ENCODE measurements at regions of chr5 and their contacts with region 1.

Region 1: GRCh38 chr5:132556763-132557477 is at the start of gene RAD50:
- DNase-seq: peak; percentile 79 to 96
- H3K4me3 ChIP-seq: peak within 1 kb of the TSS; percentile 73 to 95
- H3K27ac ChIP-seq: peak within 1 kb of the TSS; percentile 72 to 95
- H3K4me1 ChIP-seq: peaks cover 7 to 11% of the 10 kb centered on the region in 2 donors
- H3K27me3 ChIP-seq: no peaks in the 10 kb centered on the region
- CTCF ChIP-seq: no peak
- total RNA-seq, gene RAD50: 29.4 TPM

Region 2: DNA sequence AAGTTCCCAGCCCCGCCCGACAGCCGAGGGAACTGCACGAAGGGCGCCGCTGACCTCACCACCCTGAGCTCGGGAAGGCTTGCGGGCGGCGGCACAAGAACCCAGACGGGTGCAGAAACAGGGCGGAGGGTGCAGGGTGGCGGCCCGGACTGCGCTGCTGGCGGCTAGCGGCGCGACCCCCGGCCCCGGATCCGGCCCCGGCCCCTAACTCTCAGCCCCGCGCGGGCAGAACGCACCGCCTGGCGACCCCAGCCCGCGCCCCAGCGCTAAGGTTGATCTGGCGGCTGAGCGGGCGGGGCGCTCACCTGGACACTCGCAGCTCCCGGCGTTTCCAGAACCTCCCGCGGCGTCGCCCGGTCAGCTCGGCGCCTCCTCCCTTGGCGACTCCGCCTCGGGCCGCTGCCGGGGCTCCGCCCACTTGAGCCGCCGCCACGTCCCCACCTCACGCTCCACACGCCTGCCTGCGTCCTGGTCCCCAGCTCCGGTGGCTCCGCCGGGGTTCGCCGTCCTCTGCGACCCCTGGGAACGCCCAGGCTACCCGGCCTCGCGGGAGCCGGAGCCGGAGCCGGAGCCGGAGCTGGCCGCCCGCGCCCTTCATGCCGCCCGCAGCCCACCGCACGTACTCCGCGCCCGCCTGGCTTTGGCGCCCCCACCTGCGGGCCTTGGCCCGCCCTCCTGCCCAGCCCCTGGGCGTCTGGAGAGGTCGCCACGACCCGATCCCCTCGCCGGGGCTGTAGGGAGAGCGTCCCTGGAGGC is 329.3 kb before region 1 on chr5 and contains the start of gene P4HA2:
- intact Hi-C with region 1: no loop called
- DNase-seq: peak in 1 of 2 donors; percentile 89
- H3K4me3 ChIP-seq: peak within 1 kb of the TSS; percentile 61 to 83
- H3K27ac ChIP-seq: peak within 1 kb of the TSS; percentile 84 to 87
- H3K4me1 ChIP-seq: peaks cover 20 to 42% of the 10 kb centered on the region in 2 donors
- H3K27me3 ChIP-seq: no peaks in the 10 kb centered on the region
- CTCF ChIP-seq: peak in 2 of 3 experiments; percentile 25 to 27
- total RNA-seq, gene P4HA2: 22.6 TPM

Region 3: GRCh38 chr5:132410451-132411381 is 146.2 kb before region 1 on chr5:
- intact Hi-C with region 1: loop called (anchors 5 kb)
- DNase-seq: peak; percentile 63 to 90
- H3K4me3 ChIP-seq: peak overlapping the region; percentile 88 to 96
- H3K27ac ChIP-seq: peak overlapping the region; percentile 97 to 100
- H3K4me1 ChIP-seq: peaks cover 0 to 43% of the 10 kb centered on the region in 2 donors
- H3K27me3 ChIP-seq: no peaks in the 10 kb centered on the region
- CTCF ChIP-seq: peak; percentile 46 to 65 (median 56)

Region 4: DNA sequence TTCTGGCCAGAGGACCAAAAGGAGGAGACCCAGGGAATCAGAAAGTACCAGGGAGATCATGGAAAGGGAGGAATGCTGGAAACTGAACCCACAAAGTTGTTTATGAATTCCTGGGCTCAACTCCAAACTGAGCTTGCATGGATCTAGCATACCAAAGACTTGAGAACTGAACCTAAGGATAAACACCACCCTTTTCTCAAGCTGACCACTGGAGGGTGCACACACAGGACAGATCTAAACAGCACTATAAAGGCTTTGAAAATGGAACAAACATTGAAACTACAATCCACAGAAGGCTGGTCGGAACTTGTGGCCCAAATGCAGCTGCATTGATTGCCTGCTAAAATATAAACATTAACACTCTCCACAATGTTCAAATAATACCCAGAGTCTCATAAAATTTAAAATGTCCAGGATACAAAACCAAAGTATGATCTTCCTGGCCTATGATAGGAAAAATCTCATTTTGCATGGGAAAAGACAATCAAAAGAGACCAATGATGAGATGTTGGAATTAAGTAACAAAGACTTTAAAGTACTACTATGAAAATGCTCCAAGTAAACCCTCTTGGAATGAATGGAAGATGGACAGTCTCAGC is 50.7 kb before region 1 on chr5:
- intact Hi-C with region 1: no loop called
- DNase-seq: peak in 1 of 2 donors; percentile 62
- H3K4me3 ChIP-seq: no peak overlapping the region
- H3K27ac ChIP-seq: peak overlapping the region; percentile 14 to 19
- H3K4me1 ChIP-seq: peaks cover 0 to 4% of the 10 kb centered on the region in 2 donors
- H3K27me3 ChIP-seq: no peaks in the 10 kb centered on the region
- CTCF ChIP-seq: peak in 2 of 3 experiments; percentile 50 to 52

Region 5: DNA sequence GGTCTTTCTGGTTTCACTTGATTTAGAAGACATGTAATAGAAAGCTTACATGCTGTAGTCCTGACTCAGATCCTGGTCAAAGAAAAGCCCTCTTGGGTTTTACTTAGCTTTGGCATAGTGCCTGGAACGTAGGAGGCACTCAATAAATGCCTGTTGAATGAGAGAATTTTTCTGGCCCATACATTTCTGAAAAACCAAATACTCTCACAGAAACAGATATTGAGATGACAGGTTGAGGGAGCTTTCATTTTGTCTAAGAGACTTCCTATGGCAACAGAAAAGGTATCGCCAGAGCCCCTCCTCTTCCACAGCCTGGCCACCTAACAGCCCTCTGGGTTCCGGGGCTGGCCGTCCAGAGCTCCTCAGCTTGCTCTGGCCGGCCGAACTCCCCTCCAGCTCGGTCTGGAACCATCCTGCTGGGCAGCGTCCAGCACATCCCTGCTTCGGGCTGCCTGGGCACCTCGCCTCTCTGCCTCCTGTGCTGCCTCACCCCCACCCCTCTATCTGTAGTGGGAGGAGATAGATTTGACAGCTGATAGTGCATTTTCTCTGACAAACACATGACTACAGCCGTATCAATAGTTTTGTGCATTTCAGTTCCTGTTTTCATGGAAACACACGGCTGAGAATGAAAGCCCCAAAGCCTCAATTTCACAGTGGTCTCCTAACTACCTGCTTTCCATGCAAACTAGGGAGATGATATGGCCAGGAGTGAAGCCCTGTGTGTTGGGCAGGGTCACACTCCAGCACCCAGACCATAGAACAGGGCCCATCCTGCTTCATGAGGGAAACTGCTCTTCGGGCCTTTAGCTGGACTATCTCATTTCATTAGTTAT is 118.0 kb after region 1 on chr5:
- intact Hi-C with region 1: loop called (anchors 5 kb)
- DNase-seq: peak in 1 of 2 donors; percentile 73
- H3K4me3 ChIP-seq: peak overlapping the region; percentile 29 to 54
- H3K27ac ChIP-seq: peak overlapping the region; percentile 95 to 96
- H3K4me1 ChIP-seq: peaks cover 9 to 23% of the 10 kb centered on the region in 2 donors
- H3K27me3 ChIP-seq: no peaks in the 10 kb centered on the region
- CTCF ChIP-seq: no peak

Region 6: DNA sequence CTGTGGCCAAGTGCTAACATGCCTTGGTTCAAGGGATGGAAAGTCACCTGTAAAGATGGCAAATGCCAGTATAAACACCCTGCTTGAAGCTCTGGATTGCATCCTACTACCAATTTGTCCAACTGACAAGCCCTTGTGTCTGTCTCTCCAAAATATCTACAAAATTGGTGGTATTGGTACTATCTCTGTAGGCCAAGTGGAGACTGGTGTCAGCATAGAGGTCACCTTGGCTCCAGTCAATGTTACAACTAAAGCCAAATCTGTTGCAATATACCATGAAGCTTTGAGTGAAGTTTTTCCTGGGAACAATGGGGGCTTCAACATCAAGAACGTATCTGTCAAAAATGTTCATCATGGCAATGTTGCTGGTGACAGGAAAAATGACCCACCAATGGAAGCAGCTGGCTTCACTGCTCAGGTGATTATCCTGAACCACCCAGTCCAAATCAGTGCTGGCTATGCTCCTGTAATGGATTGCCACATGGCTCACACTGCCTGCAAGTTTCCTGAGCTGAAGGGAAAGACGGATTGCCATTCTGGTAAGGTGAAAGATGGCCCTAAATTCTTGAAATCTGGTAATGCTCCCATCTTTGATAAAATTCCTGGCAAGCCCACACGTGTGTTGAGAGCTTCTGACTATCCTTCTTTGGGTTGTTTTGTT is 386.6 kb after region 1 on chr5:
- intact Hi-C with region 1: no loop called
- DNase-seq: no peak
- H3K4me3 ChIP-seq: no peak overlapping the region
- H3K27ac ChIP-seq: no peak overlapping the region
- H3K4me1 ChIP-seq: peaks cover 4 to 16% of the 10 kb centered on the region in 2 donors
- H3K27me3 ChIP-seq: no peaks in the 10 kb centered on the region
- CTCF ChIP-seq: no peak

Region 7: GRCh38 chr5:133483406-133484090 is 926.6 kb after region 1 on chr5:
- intact Hi-C with region 1: no loop called
- DNase-seq: no peak
- H3K4me3 ChIP-seq: no peak overlapping the region
- H3K27ac ChIP-seq: no peak overlapping the region
- H3K4me1 ChIP-seq: no peaks in the 10 kb centered on the region
- H3K27me3 ChIP-seq: no peaks in the 10 kb centered on the region
- CTCF ChIP-seq: no peak